ENCODE measurements at regions of chr10 and their contacts with region 1.

Region 1: DNA sequence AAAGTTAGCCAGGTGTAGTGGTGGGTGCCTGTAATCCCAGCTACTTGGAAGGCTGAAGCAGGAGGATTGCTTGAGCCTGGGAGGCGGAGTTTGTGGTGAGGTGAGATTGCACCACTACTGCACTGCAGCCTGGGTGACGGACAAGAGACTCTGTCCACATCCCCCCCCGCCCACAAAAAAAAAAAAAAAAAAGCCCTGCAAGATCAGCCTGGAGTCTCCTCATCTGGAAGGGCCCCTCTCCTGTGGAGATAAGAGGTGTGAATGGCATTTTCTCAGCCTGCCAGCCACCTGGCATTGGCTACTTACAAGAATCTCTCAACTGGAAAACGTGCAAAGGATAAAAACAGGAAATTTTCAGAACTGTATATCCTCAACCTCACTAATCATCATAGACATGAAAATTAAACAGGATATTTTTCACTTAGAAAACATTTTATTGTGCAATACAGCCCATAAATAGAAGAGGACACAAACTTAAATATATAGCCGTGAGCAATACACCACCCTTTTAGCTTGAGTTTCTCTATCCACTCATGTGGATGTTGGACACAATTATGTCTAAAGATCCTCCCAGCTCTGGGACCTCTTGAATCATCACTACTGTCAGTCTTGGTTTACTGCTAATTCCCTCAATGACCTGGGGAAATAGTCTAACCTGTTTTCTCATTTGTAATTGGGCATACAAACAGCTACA is 11.3 kb upstream of the TSPAN15 start:
- DNase-seq: peak in 1 of 2 experiments; percentile 59
- ATAC-seq: peak in 1 of 2 experiments; percentile 68; a peak in 3 of 6 replicates
- H3K4me3 ChIP-seq: no peak overlapping the region
- H3K27ac ChIP-seq: peak overlapping the region; percentile 87 to 92
- H3K4me1 ChIP-seq: peaks cover 45% of the 10 kb centered on the region
- CTCF ChIP-seq: no peak
- EP300 ChIP-seq: no peak
- POLR2A ChIP-seq: no peak
- RAD21 ChIP-seq: no peak

Region 2: GRCh38 chr10:69451209-69451783 is 11.3 kb after region 1 on chr10 and contains the start of gene TSPAN15:
- CTCF ChIA-PET with region 1: interaction called, 20 read pairs
- POLR2A ChIA-PET with region 1: interaction called, 13 read pairs
- DNase-seq: peak; percentile 78 to 94
- ATAC-seq: peak; percentile 84 to 85
- H3K4me3 ChIP-seq: peak within 1 kb of the TSS; percentile 78
- H3K27ac ChIP-seq: peak within 1 kb of the TSS; percentile 92 to 94
- H3K4me1 ChIP-seq: peaks cover 74% of the 10 kb centered on the region
- CTCF ChIP-seq: no peak
- EP300 ChIP-seq: no peak
- POLR2A ChIP-seq: peak; percentile 39
- RAD21 ChIP-seq: no peak
- polyA plus RNA-seq, gene TSPAN15: 89.0 and 89.6 TPM in 2 replicates

Measured in A549 (cell line).